Sciatic nerve (tissue), 2 donors: ENCODE measurements at regions of chr18 and their contacts with region 1.

Region 1: DNA sequence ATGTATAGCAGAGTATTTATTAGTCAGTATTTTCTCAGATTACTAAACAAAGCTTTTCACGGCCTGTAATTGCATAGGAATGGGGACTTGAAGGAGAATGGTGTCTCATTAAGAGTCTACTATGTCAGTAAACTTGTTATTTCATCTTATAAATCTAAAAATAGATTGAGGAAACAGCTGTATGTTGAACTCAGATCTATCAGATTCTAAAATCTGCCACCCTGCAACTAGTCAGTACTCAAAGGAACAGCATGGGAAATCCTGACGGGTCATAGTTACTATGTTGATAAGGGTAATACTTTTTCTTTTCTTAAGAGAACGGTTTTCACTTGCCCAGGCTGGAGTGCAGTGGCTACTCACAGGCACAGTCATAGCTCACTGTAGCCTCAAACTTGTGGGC is 70.2 kb upstream of the EMILIN2 start:
- DNase-seq: no peak
- ATAC-seq: no peak

Region 2: GRCh38 chr18:2425426-2426317 is 350.9 kb before region 1 on chr18:
- intact Hi-C with region 1: no loop called
- DNase-seq: no peak
- ATAC-seq: no peak

Region 3: GRCh38 chr18:2839208-2839607 is 62.6 kb after region 1 on chr18:
- intact Hi-C with region 1: no loop called
- DNase-seq: no peak
- ATAC-seq: no peak

Region 4: DNA sequence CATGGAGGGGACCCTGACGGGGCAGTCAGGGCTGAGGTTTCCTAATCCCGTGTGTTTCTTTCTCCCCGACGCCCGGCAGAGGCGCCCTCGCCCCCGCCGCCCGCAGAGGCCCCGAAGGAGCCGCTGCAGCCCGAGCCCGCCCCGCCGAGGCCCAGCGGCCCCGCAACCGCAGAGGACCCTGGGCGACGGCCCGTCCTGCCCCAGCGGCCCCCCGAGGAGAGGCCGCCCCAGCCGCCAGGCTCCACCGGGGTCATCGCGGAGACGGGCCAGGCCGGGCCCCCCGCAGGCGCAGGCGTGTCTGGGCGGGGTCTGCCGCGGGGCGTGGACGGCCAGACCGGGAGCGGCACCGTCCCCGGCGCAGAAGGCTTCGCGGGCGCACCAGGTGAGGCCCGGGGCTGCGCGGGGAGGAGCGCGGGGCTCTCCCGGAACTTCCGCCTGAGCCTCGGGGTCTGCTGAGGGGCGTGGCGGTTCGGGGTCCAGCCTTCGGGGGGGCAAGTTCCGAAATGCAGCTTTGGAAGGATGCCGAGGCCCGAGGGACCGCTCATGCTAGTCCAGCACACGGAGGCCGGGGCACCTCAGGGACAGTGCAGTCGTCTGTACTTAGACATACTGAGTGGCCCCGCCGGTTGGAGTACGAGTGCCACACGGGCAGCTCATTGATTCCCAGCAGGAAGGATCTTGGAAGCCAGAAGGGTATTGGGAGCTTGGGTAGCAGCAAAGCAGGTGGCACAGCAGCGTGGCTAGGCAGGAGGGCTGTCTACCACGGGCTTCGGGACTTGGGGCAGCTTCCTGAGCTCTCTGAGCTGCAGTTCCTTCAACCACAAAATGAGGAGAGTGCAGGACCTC is 130.3 kb after region 1 on chr18:
- intact Hi-C with region 1: loop called (anchors 10 kb)
- DNase-seq: no peak
- ATAC-seq: peak; percentile 3

Region 5: GRCh38 chr18:3782901-3783300 is 1006.3 kb after region 1 on chr18:
- intact Hi-C with region 1: no loop called
- DNase-seq: no peak
- ATAC-seq: no peak